GM12878 (cell line): ENCODE measurements at regions of chr17 and their contacts with region 1.

Region 1: GRCh38 chr17:81512560-81513371 is at the start of gene ACTG1:
- DNase-seq: no peak
- ATAC-seq: peak; percentile 25
- H3K4me3 ChIP-seq: peak within 1 kb of the TSS; percentile 95
- H3K27ac ChIP-seq: peak within 1 kb of the TSS; percentile 100
- H3K4me1 ChIP-seq: peaks cover 12% of the 10 kb centered on the region
- H3K27me3 ChIP-seq: no peaks in the 10 kb centered on the region
- CTCF ChIP-seq: no peak
- EP300 ChIP-seq: no peak
- POLR2A ChIP-seq: peak; percentile 89
- RAD21 ChIP-seq: no peak
- polyA plus RNA-seq, gene ACTG1: 969 to 1,906 TPM

Region 2: GRCh38 chr17:81253358-81254131 is 259.2 kb before region 1 on chr17:
- CTCF ChIA-PET with region 1: no interaction called
- POLR2A ChIA-PET with region 1: interaction called, 6 read pairs
- RAD21 ChIA-PET with region 1: no interaction called
- SMC1A ChIA-PET with region 1: no interaction called
- in situ Hi-C with region 1: no loop called
- intact Hi-C with region 1: loop called (anchors 10 kb)
- DNase-seq: no peak
- ATAC-seq: peak; percentile 81
- H3K4me3 ChIP-seq: no peak overlapping the region
- H3K27ac ChIP-seq: no peak overlapping the region
- H3K4me1 ChIP-seq: no peaks in the 10 kb centered on the region
- H3K27me3 ChIP-seq: no peaks in the 10 kb centered on the region
- CTCF ChIP-seq: peak; percentile 60 to 85 (median 72)
- EP300 ChIP-seq: no peak
- POLR2A ChIP-seq: no peak
- RAD21 ChIP-seq: peak; percentile 70

Region 3: GRCh38 chr17:81553018-81553615 is 40.4 kb after region 1 on chr17:
- CTCF ChIA-PET with region 1: interaction called, 7 read pairs
- POLR2A ChIA-PET with region 1: interaction called, 34 read pairs
- RAD21 ChIA-PET with region 1: interaction called, 17 read pairs
- SMC1A ChIA-PET with region 1: interaction called, 6 read pairs
- in situ Hi-C with region 1: no loop called
- intact Hi-C with region 1: loop called (anchors 2 kb)
- DNase-seq: peak; percentile 53
- ATAC-seq: peak; percentile 86
- H3K4me3 ChIP-seq: peak overlapping the region; percentile 93
- H3K27ac ChIP-seq: peak overlapping the region; percentile 58
- H3K4me1 ChIP-seq: peaks cover 14% of the 10 kb centered on the region
- H3K27me3 ChIP-seq: no peaks in the 10 kb centered on the region
- CTCF ChIP-seq: peak in 2 of 3 experiments; percentile 20 to 40; a peak in 3 of 6 replicates
- EP300 ChIP-seq: no peak
- POLR2A ChIP-seq: 0 out of 2 replicates have a peak, but pooled peaks have one; percentile 36
- RAD21 ChIP-seq: peak; percentile 12; the same call in 1 of the 2 replicates

Region 4: DNA sequence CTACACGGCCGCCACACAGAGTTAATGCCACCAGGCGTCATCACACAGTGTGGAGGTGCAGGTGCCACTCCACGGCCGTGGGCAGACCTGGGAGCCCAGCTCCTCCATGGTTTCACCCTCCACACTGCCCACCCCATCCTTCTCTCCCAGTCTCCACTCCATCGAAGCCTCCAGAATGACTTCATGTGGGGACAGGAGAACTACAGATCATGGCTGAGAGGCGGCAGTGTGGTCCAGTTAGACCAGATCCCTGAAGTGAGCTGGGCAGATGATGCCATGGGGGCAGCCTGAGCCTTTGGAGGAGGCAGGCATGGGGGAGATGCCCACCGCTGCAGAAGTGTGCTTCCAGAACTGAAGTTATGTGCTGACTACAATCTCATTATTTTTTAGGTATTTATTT is 77.4 kb after region 1 on chr17:
- CTCF ChIA-PET with region 1: no interaction called
- POLR2A ChIA-PET with region 1: no interaction called
- RAD21 ChIA-PET with region 1: no interaction called
- SMC1A ChIA-PET with region 1: no interaction called
- in situ Hi-C with region 1: no loop called
- intact Hi-C with region 1: no loop called
- DNase-seq: no peak
- ATAC-seq: no peak
- H3K4me3 ChIP-seq: no peak overlapping the region
- H3K27ac ChIP-seq: no peak overlapping the region
- H3K4me1 ChIP-seq: no peaks in the 10 kb centered on the region
- H3K27me3 ChIP-seq: no peaks in the 10 kb centered on the region
- CTCF ChIP-seq: no peak
- EP300 ChIP-seq: no peak
- POLR2A ChIP-seq: no peak
- RAD21 ChIP-seq: no peak